ENCODE measurements at regions of chr6 and their contacts with region 1.

Region 1: GRCh38 chr6:474453-475185 is 83.1 kb downstream of the IRF4 start:
- DNase-seq: peak; percentile 69
- ATAC-seq: peak; percentile 71
- H3K4me3 ChIP-seq: peak overlapping the region in 1 of 5 experiments; percentile 11
- H3K4me3 Mint-ChIP-seq: peak overlapping the region; percentile 54
- H3K27ac ChIP-seq: no peak overlapping the region
- H3K27ac Mint-ChIP-seq: no peak overlapping the region
- H3K4me1 ChIP-seq: peaks cover 27 to 35% of the 10 kb centered on the region in 2 donors
- H3K4me1 Mint-ChIP-seq: peaks cover 52% of the 10 kb centered on the region
- H3K27me3 ChIP-seq: no peaks in the 10 kb centered on the region
- H3K27me3 Mint-ChIP-seq: no peaks in the 10 kb centered on the region
- CTCF ChIP-seq: no peak

Region 2: GRCh38 chr6:408599-409102 is 66.0 kb before region 1 on chr6:
- CTCF ChIA-PET with region 1: no interaction called
- POLR2A ChIA-PET with region 1: no interaction called
- intact Hi-C with region 1: loop called (anchors 5 kb)
- DNase-seq: peak; percentile 60
- ATAC-seq: no peak
- H3K4me3 ChIP-seq: no peak overlapping the region
- H3K4me3 Mint-ChIP-seq: no peak overlapping the region
- H3K27ac ChIP-seq: peak overlapping the region in 1 of 2 donors; percentile 89
- H3K27ac Mint-ChIP-seq: peak overlapping the region; percentile 81
- H3K4me1 ChIP-seq: peaks cover 17 to 19% of the 10 kb centered on the region in 2 donors
- H3K4me1 Mint-ChIP-seq: peaks cover 44% of the 10 kb centered on the region
- H3K27me3 ChIP-seq: no peaks in the 10 kb centered on the region
- H3K27me3 Mint-ChIP-seq: no peaks in the 10 kb centered on the region
- CTCF ChIP-seq: peak; percentile 74

Region 3: GRCh38 chr6:579339-579738 is 104.7 kb after region 1 on chr6:
- CTCF ChIA-PET with region 1: no interaction called
- POLR2A ChIA-PET with region 1: no interaction called
- intact Hi-C with region 1: no loop called
- DNase-seq: no peak
- ATAC-seq: no peak
- H3K4me3 ChIP-seq: no peak overlapping the region
- H3K4me3 Mint-ChIP-seq: no peak overlapping the region
- H3K27ac ChIP-seq: no peak overlapping the region
- H3K27ac Mint-ChIP-seq: no peak overlapping the region
- H3K4me1 ChIP-seq: no peaks in the 10 kb centered on the region
- H3K4me1 Mint-ChIP-seq: no peaks in the 10 kb centered on the region
- H3K27me3 ChIP-seq: no peaks in the 10 kb centered on the region
- H3K27me3 Mint-ChIP-seq: no peaks in the 10 kb centered on the region
- CTCF ChIP-seq: no peak